ENCODE measurements at regions of chr12 and their contacts with region 1.

Region 1: GRCh38 chr12:120234643-120235368 is 30.7 kb downstream of the PXN start:
- H3K4me3 ChIP-seq: no peak overlapping the region
- H3K27ac ChIP-seq: peak overlapping the region; percentile 11; the same call in 1 of the 2 replicates
- H3K4me1 ChIP-seq: peaks cover 36% of the 10 kb centered on the region
- CTCF ChIP-seq: peak; percentile 48

Region 2: DNA sequence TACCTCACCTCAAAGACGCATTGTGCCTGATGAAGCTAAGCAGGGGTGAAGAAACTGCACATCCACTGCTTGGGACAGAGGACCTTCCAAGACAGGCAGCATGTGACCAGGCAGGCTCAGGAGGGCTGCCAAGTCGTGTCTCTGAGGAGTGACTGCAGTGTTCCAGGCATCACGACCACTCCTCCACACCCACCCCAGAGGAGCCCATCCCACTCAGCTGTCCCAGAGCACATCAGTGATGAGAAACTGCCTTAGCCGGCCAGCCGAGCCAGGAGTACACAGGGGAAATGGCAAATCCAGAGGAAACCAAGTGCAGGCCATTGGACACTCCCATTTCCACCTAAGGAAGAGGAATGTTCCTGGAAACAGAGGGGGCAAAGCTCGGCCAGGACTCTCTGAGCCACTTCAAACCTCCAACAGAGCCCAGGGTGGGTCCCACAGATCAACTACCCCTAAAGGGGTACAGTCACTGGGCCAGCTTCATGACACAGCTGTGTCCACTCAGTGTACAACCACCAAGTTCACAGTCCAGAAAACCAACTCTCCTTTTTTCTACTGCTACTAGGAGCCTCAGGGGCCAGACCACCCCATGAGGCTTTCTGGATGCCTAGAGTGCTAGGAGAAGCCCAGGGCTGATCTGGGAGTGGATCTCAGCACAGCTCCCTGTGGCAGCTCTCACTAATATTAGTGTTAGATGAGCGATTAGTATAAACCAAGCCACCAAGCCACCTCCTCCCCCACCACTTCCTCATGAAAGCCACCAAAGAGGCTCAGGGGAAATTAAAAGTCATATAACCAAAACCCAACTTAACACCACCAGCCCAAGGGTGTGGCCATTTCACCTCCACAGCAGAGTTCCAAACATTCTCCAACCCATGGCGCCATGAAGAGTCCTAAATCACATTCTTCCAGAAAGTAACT is 15.3 kb after region 1 on chr12:
- CTCF ChIA-PET with region 1: interaction called, 581 read pairs
- POLR2A ChIA-PET with region 1: interaction called, 12 read pairs
- H3K4me3 ChIP-seq: no peak overlapping the region
- H3K27ac ChIP-seq: no peak overlapping the region
- H3K4me1 ChIP-seq: no peaks in the 10 kb centered on the region
- CTCF ChIP-seq: no peak

Region 3: DNA sequence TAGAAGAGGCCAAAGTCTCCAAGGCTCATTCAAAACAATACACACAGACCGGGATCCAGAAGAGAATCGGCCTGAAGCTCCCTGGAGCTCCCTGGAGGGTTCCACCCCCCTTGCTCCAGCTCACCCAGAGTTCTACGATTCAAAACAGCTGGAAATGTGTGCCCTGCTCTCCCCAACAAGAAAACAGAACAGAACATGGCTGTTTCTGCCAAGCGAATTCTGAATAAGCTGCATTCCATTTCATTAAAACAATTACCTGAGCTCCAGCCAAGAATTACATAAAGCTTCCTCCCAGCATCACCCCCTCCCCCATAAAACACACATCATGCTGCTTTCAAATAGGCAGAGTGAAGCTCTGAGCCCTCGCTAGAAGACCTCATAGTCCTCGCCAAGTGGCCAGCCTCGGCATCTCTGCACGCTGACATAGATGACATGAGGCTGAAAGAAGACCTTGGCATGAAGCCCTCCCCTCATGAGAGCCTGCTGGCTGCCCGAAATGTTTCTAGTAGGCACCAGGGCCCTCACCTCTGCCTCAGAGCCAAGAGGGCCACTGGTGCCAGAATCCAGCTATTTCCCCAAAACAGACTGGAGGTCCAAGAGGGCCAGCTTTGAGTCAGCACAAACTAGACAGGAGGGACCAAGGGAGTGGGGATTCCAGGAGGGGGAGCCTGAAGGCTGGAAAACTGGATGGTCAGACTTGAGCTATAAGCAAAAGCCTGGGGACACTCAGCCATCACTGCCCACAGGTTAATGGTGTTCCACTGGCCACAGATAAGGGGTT is 22.4 kb after region 1 on chr12:
- CTCF ChIA-PET with region 1: interaction called, 581 read pairs
- POLR2A ChIA-PET with region 1: interaction called, 126 read pairs
- H3K4me3 ChIP-seq: no peak overlapping the region
- H3K27ac ChIP-seq: no peak overlapping the region
- H3K4me1 ChIP-seq: peaks cover 5% of the 10 kb centered on the region; the same call in 1 of the 2 replicates
- CTCF ChIP-seq: 0 out of 2 replicates have a peak, but pooled peaks have one; percentile 11

Measured in HEK293 (cell line).